ENCODE measurements at regions of chr20 and their contacts with region 1.

Region 1: GRCh38 chr20:20369250-20370093 is 1.6 kb downstream of the INSM1 start:
- DNase-seq: peak in 4 of 10 donors; percentile 13 to 83 (median 54)
- H3K4me3 ChIP-seq: peak overlapping the region; percentile 32 to 76 (median 62)
- H3K27ac ChIP-seq: peak overlapping the region in 39 of 59 donors; percentile 32 to 94 (median 69)
- H3K27me3 ChIP-seq: peaks cover 0 to 59% (median 30%) of the 10 kb centered on the region in 45 donors
- CTCF ChIP-seq: peak in 17 of 56 donors; percentile 5 to 34 (median 20)

Region 2: GRCh38 chr20:19952392-19952791 is 417.1 kb before region 1 on chr20:
- intact Hi-C with region 1: no loop called
- DNase-seq: no peak
- H3K4me3 ChIP-seq: no peak overlapping the region
- H3K27ac ChIP-seq: peak overlapping the region in 4 of 59 donors; percentile 12 to 41 (median 25)
- H3K27me3 ChIP-seq: no peaks in the 10 kb centered on the region
- CTCF ChIP-seq: no peak

Region 3: GRCh38 chr20:20076297-20077065 is 293.0 kb before region 1 on chr20:
- intact Hi-C with region 1: loop called (anchors 5 to 10 kb)
- DNase-seq: peak in 9 of 10 donors; percentile 74 to 95 (median 92)
- H3K4me3 ChIP-seq: no peak overlapping the region
- H3K27ac ChIP-seq: peak overlapping the region in 4 of 59 donors; percentile 6 to 56 (median 32)
- H3K27me3 ChIP-seq: no peaks in the 10 kb centered on the region
- CTCF ChIP-seq: peak in 6 of 56 donors; percentile 11 to 38 (median 27)

Region 4: DNA sequence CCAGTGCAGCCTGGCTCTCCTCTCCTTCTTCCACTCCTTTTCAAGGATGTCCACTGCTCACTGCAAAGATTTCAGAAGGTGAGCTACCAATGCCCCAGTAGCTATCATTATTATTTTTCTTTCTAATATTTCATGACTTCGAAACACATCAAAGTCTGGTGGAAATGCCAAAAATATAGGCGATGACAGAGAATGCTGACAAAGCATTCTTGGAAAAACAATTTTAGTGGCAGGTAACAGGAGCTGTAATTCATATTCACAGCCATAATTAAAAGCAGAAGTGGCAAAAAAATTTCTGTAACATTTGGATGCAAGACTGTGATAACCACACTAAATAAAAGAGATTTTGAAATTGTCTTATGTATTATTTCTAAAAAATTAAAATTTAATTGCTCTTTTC is 209.4 kb after region 1 on chr20:
- intact Hi-C with region 1: no loop called
- DNase-seq: no peak
- H3K4me3 ChIP-seq: no peak overlapping the region
- H3K27ac ChIP-seq: no peak overlapping the region
- H3K27me3 ChIP-seq: no peaks in the 10 kb centered on the region
- CTCF ChIP-seq: no peak